Endothelial cell of umbilical vein (primary cell): ENCODE measurements at regions of chr1 and their contacts with region 1.

Region 1: DNA sequence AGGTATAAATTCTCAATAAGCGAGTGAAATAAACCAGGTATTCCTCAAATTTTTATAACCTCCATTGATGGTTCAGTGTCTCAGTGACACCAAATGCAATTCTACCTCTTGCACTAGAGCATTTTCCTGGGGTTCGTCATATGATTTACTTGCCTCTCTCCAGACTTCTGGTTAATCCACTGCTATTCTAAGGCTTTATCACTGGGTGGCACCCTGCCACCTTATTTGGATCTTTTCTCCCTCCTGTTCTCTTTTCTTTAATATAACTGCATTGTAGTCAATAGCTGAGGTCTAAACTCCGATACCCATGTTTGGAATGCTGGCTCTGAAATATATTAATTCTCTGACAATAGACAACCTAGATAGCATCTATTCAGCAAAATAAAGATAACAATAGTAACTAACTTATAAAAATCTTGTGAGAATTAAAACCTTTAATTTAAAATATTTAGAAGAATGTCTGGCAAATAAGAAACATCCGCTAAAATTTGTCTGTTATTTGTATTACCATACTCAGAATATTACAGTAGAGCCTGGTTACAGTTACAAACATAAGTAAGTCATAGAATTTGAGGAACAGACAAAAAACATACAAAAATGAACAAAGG is 436.4 kb downstream of the PLA2G4A start:
- DNase-seq: peak; percentile 70
- H3K4me3 ChIP-seq: no peak overlapping the region
- H3K27ac ChIP-seq: no peak overlapping the region
- H3K4me1 ChIP-seq: no peaks in the 10 kb centered on the region
- H3K27me3 ChIP-seq: peaks cover 0 to 4% of the 10 kb centered on the region in 2 experiments
- CTCF ChIP-seq: peak; percentile 29 to 49
- POLR2A ChIP-seq: no peak

Region 2: GRCh38 chr1:188128761-188129160 is 863.7 kb after region 1 on chr1:
- CTCF ChIA-PET with region 1: interaction called, 3 read pairs
- POLR2A ChIA-PET with region 1: no interaction called
- dilution Hi-C with region 1: no loop called
- intact Hi-C with region 1: loop called (anchors 5 kb)
- DNase-seq: peak; percentile 17
- H3K4me3 ChIP-seq: no peak overlapping the region
- H3K27ac ChIP-seq: no peak overlapping the region
- H3K4me1 ChIP-seq: no peaks in the 10 kb centered on the region
- H3K27me3 ChIP-seq: no peaks in the 10 kb centered on the region
- CTCF ChIP-seq: peak in 1 of 2 donors; percentile 8
- POLR2A ChIP-seq: no peak